A673 (cell line): ENCODE measurements at regions of chr1 and their contacts with region 1.

Region 1: GRCh38 chr1:180893614-180894013 is 19.1 kb upstream of the KIAA1614 start:
- DNase-seq: peak; percentile 30
- H3K4me3 ChIP-seq: no peak overlapping the region
- H3K27ac ChIP-seq: no peak overlapping the region
- H3K4me1 ChIP-seq: no peaks in the 10 kb centered on the region
- H3K27me3 ChIP-seq: no peaks in the 10 kb centered on the region
- CTCF ChIP-seq: no peak

Region 2: DNA sequence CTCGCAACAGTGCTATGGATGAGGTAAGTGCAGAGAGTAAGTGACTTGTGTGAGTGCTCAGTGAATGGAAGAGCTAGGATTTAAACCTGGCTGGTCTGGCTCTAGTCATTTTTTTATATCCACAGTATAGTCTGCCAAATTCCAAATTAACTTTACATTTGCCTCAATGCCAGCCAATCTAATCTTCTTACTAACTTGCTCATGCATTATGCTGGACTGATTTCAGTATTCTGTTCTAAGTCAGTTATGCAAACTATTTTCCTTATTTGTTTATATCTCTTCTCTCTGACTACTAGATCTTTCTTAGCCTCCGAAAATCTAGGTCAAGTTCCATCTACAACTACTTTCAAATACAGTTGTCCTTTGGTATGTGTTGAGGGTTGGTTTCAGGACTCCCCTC is 128.5 kb before region 1 on chr1:
- CTCF ChIA-PET with region 1: no interaction called
- POLR2A ChIA-PET with region 1: no interaction called
- intact Hi-C with region 1: no loop called
- DNase-seq: no peak
- H3K4me3 ChIP-seq: no peak overlapping the region
- H3K27ac ChIP-seq: no peak overlapping the region
- H3K4me1 ChIP-seq: no peaks in the 10 kb centered on the region
- H3K27me3 ChIP-seq: no peaks in the 10 kb centered on the region
- CTCF ChIP-seq: no peak

Region 3: GRCh38 chr1:181073638-181074037 is 180.0 kb after region 1 on chr1:
- CTCF ChIA-PET with region 1: interaction called, 15 read pairs
- POLR2A ChIA-PET with region 1: no interaction called
- intact Hi-C with region 1: no loop called
- DNase-seq: no peak
- H3K4me3 ChIP-seq: no peak overlapping the region
- H3K27ac ChIP-seq: no peak overlapping the region
- H3K4me1 ChIP-seq: peaks cover 19% of the 10 kb centered on the region
- H3K27me3 ChIP-seq: no peaks in the 10 kb centered on the region
- CTCF ChIP-seq: no peak

Region 4: GRCh38 chr1:181314959-181315358 is 421.3 kb after region 1 on chr1:
- CTCF ChIA-PET with region 1: no interaction called
- POLR2A ChIA-PET with region 1: no interaction called
- intact Hi-C with region 1: no loop called
- DNase-seq: no peak
- H3K4me3 ChIP-seq: no peak overlapping the region
- H3K27ac ChIP-seq: no peak overlapping the region
- H3K4me1 ChIP-seq: no peaks in the 10 kb centered on the region
- H3K27me3 ChIP-seq: peaks cover 99% of the 10 kb centered on the region
- CTCF ChIP-seq: no peak